PC-3 (cell line): ENCODE measurements at regions of chr10 and their contacts with region 1.

Region 1: DNA sequence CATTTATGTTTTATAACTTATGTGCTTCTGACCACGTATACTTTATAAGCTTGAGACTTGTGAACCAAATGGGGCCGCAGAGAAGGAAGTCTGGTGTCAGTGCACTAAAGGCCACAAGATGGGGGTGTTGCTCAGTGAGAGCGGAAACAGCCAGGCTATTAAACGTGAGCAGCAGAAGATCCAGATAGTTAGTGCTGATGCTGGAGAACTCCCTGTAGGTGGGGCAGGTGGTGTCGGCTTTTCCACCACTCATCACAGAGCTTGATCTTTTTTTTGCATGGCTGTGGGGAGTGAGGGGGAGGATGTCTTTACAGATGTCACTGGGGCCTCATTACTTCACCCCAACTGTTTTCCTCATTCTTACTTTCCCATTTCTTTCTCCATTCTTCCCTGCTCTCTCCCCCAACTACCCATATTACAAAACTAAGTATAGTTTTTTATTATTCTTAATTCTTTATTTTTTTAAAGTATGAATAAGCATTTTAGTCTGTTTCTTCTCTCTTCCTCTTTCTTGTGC is 34.7 kb downstream of the ACADSB start:
- DNase-seq: peak; percentile 76
- ATAC-seq: peak; percentile 96
- H3K4me3 ChIP-seq: no peak overlapping the region
- H3K27ac ChIP-seq: no peak overlapping the region
- H3K4me1 ChIP-seq: no peaks in the 10 kb centered on the region
- H3K27me3 ChIP-seq: no peaks in the 10 kb centered on the region
- CTCF ChIP-seq: peak; percentile 83

Region 2: DNA sequence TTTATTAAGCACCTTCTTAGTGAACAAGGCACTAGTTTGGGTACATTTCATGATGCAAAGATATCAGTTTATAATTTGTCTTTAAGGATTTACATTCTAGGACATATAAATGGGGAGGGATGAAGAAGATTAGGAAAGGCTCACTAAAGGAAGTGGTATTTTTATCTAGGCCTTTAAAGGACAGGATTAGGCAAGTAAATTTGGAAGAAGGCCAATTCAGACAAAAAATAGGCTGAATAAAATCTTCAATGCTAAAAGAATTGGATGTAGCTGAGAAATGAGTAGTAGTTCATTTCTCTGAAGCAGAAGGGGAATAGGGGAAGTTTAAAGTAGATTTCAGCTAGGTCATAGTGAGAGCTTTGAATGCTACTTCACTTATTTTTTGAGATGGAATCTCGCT is 159.3 kb before region 1 on chr10:
- CTCF ChIA-PET with region 1: no interaction called
- POLR2A ChIA-PET with region 1: no interaction called
- intact Hi-C with region 1: no loop called
- DNase-seq: no peak
- ATAC-seq: no peak
- H3K4me3 ChIP-seq: no peak overlapping the region
- H3K27ac ChIP-seq: no peak overlapping the region
- H3K4me1 ChIP-seq: peaks cover 9% of the 10 kb centered on the region
- H3K27me3 ChIP-seq: no peaks in the 10 kb centered on the region
- CTCF ChIP-seq: no peak

Region 3: GRCh38 chr10:123132576-123133477 is 89.4 kb after region 1 on chr10:
- CTCF ChIA-PET with region 1: interaction called, 3 read pairs
- POLR2A ChIA-PET with region 1: no interaction called
- intact Hi-C with region 1: loop called (anchors 2 kb)
- DNase-seq: peak; percentile 84
- ATAC-seq: peak; percentile 65
- H3K4me3 ChIP-seq: peak overlapping the region; percentile 47; the same call in 1 of the 2 replicates
- H3K27ac ChIP-seq: no peak overlapping the region
- H3K4me1 ChIP-seq: peaks cover 23% of the 10 kb centered on the region
- H3K27me3 ChIP-seq: peaks cover 34% of the 10 kb centered on the region
- CTCF ChIP-seq: peak; percentile 77

Region 4: DNA sequence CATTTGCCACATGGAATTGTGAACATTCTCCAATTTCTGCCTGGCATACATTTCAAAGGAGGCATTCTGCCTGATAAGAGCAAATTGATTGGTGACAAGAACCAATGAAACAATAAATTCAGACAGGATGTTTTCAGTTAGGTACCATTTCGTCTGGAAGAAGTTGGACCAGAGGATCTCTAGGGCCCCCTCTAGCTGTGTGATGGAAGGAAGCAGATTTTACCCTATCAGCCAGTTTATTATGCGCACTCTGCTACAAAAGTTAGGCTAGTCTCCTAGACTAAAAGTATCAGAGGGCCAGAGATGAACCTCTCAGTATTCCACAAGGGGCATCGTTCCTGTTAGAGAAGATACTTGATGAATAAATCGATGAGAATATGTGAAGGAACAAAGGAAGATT is 228.7 kb after region 1 on chr10:
- CTCF ChIA-PET with region 1: no interaction called
- POLR2A ChIA-PET with region 1: no interaction called
- intact Hi-C with region 1: loop called (anchors 10 kb)
- DNase-seq: peak; percentile 25
- ATAC-seq: no peak
- H3K4me3 ChIP-seq: no peak overlapping the region
- H3K27ac ChIP-seq: no peak overlapping the region
- H3K4me1 ChIP-seq: peaks cover 13% of the 10 kb centered on the region; the same call in 1 of the 2 replicates
- H3K27me3 ChIP-seq: no peaks in the 10 kb centered on the region
- CTCF ChIP-seq: peak; percentile 49

Region 5: GRCh38 chr10:123559066-123559822 is 515.8 kb after region 1 on chr10:
- CTCF ChIA-PET with region 1: interaction called, 3 read pairs
- POLR2A ChIA-PET with region 1: no interaction called
- intact Hi-C with region 1: loop called (anchors 1 kb)
- DNase-seq: peak; percentile 65
- ATAC-seq: peak; percentile 81
- H3K4me3 ChIP-seq: no peak overlapping the region
- H3K27ac ChIP-seq: no peak overlapping the region
- H3K4me1 ChIP-seq: peaks cover 1% of the 10 kb centered on the region; the same call in 1 of the 2 replicates
- H3K27me3 ChIP-seq: peaks cover 5% of the 10 kb centered on the region; the same call in 1 of the 2 replicates
- CTCF ChIP-seq: peak; percentile 90

Region 6: GRCh38 chr10:123967396-123968243 is 924.2 kb after region 1 on chr10:
- CTCF ChIA-PET with region 1: no interaction called
- POLR2A ChIA-PET with region 1: no interaction called
- intact Hi-C with region 1: loop called (anchors 5 kb)
- DNase-seq: peak; percentile 63
- ATAC-seq: peak; percentile 83
- H3K4me3 ChIP-seq: no peak overlapping the region
- H3K27ac ChIP-seq: no peak overlapping the region
- H3K4me1 ChIP-seq: no peaks in the 10 kb centered on the region
- H3K27me3 ChIP-seq: peaks cover 25% of the 10 kb centered on the region
- CTCF ChIP-seq: peak; percentile 82